Ovary (tissue), 10 donors: ENCODE measurements at regions of chr4 and their contacts with region 1.

Region 1: DNA sequence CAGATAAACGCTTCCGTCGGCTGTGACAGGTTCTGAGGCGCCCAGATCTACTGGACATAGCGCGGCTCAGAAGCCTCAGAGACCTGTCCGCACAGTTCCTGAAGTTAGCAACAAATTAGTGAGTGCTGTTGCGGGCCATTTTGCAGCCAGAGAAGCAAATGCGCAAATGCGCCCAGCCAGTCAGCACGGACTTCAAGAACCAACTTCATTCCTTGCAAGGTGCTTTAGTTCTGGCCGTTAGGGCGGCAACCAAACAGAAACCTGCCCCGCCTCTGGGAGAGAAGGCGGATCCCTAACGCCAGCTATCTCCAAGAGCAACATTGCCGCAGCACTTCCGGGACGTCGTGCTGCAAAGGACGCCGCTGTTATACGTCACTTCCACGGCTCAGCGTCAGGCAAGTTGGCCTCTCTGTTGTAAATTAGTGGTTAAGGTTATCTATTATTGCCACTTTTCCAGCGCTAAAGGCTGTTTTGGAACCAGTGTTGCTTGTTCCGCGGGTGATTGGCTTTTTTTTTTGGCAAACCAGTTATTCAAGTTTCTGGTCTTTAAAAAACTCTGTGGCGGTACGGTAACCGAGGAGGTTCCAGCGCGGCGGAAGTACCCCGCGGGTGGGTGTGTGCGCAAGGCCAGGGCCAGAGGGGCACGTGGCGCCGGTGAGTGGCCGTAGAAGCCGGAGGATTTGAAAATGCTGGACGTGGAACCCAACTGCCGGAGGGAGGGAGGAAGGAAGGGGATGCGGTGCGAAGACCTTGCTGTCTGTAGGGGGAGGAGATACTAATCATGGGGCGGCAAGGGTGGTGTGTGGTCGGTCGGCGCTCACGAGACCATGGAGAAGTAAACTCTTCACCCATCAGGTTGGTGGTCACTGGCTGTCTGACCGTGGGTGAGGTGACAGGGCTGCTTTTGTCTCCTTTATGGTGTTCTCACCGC is at the start of gene GAR1:
- DNase-seq: peak; percentile 83 to 87 (median 84)
- H3K4me3 ChIP-seq: peak within 1 kb of the TSS; percentile 85
- H3K27ac ChIP-seq: peak within 1 kb of the TSS; percentile 23 to 72
- H3K4me1 ChIP-seq: peaks cover 4% of the 10 kb centered on the region
- H3K27me3 ChIP-seq: no peaks in the 10 kb centered on the region
- CTCF ChIP-seq: no peak
- EP300 ChIP-seq: no peak
- POLR2A ChIP-seq: no peak
- total RNA-seq, gene GAR1: 4.3 to 22.5 (median 15.7) TPM

Region 2: DNA sequence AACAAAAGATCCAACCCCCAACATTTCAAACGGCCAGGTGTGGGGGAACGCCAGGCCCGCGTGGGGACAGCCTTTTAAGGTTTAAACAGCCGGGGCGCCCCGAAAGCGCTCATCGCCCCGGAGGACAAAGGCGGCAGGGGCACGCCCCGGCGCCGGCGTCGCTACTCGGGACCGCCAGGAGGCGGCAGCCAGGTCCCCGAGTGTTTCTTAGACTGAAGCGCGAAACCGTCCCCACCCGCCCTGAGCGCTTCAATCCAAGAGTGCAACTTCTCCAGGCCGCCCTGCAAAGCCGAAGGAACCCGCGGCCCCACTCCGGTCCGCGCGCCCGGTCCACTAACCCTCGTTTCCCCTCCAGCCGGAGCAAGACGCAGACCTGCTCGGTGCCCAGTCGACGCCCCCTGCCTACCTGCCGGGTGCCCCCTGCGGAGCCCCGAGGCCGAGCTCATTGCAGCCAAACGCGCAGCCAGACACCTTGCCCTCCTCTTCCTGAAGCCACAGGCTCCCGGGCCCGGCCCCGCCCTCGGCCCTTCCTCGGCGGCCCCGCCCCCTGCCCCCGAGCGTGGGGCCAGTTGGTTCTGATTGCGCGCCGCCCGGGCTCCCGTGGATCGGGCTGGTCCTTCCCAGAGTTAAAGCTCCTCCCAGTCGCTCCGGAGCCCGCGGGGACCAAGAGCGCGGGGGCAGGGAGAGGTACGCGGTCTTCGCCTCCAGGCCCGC is 112.3 kb before region 1 on chr4 and contains the start of gene CASP6:
- intact Hi-C with region 1: loop called in 3 of 4 experiments (anchors 10 kb)
- DNase-seq: peak; percentile 83 to 90 (median 84)
- H3K4me3 ChIP-seq: peak within 1 kb of the TSS; percentile 88
- H3K27ac ChIP-seq: peak within 1 kb of the TSS; percentile 63 to 68
- H3K4me1 ChIP-seq: peaks cover 5% of the 10 kb centered on the region
- H3K27me3 ChIP-seq: no peaks in the 10 kb centered on the region
- CTCF ChIP-seq: peak; percentile 23 to 63 (median 57)
- EP300 ChIP-seq: no peak
- POLR2A ChIP-seq: no peak
- total RNA-seq, gene CASP6: 11.2 to 19.3 (median 13.1) TPM

Region 3: DNA sequence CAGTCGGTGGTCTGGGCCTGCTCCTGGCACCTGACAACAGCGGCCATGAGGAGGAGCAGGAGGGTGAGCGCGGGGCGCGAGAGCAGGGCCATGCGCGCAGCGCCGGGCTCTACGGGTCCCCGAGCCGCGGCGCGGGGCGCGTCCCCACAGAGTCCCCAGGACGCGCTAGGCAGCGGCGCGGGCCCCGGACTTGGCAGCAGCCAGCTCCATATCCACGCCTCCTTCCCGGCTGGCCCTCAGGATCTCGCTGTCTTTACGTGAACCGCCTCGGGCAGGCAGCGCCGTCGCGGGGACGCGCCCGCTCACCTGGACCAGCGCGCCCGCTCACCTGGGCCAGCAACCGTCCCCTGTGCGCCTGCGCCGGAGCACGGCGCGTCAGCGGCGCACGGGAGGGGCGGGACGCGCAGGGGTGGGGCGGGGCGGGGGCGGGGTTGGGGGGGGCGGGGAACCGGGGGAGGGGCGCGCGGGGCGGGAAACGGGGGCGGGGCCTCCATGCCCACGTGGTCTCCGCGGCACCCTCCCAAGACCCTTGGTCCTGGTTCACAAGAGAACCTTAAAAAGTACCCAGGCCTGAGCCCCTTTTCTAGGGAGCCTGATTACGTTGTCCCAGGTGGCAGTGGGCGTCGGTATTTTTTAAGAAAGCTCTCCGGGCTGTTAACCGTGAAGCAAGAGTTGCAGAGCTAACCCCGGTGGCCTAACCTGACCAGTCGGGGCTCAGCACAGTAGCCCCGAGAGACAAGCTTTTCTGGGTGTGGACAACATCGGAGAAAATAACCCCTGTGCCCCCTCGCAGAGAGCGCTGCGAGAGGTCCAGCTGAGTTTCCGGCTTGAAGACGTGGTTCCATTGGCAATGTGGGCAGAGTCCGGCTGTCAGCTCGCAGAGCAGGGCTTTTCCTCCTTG is 85.4 kb before region 1 on chr4 and contains the start of gene PLA2G12A:
- intact Hi-C with region 1: loop called in 1 of 4 experiments (anchors 10 kb)
- DNase-seq: peak; percentile 63 to 84 (median 81)
- H3K4me3 ChIP-seq: peak within 1 kb of the TSS; percentile 83
- H3K27ac ChIP-seq: peak within 1 kb of the TSS; percentile 72 to 76
- H3K4me1 ChIP-seq: no peaks in the 10 kb centered on the region
- H3K27me3 ChIP-seq: no peaks in the 10 kb centered on the region
- CTCF ChIP-seq: no peak
- EP300 ChIP-seq: no peak
- POLR2A ChIP-seq: peak; percentile 52
- total RNA-seq, gene PLA2G12A: 31.2 to 84.3 (median 35.9) TPM

Region 4: GRCh38 chr4:109752525-109752924 is 62.9 kb before region 1 on chr4:
- intact Hi-C with region 1: no loop called
- DNase-seq: no peak
- H3K4me3 ChIP-seq: no peak overlapping the region
- H3K27ac ChIP-seq: no peak overlapping the region
- H3K4me1 ChIP-seq: no peaks in the 10 kb centered on the region
- H3K27me3 ChIP-seq: no peaks in the 10 kb centered on the region
- CTCF ChIP-seq: no peak
- EP300 ChIP-seq: no peak
- POLR2A ChIP-seq: no peak

Region 5: GRCh38 chr4:109910256-109910655 is 94.8 kb after region 1 on chr4:
- intact Hi-C with region 1: no loop called
- DNase-seq: no peak
- H3K4me3 ChIP-seq: no peak overlapping the region
- H3K27ac ChIP-seq: no peak overlapping the region
- H3K4me1 ChIP-seq: no peaks in the 10 kb centered on the region
- H3K27me3 ChIP-seq: no peaks in the 10 kb centered on the region
- CTCF ChIP-seq: no peak
- EP300 ChIP-seq: no peak
- POLR2A ChIP-seq: no peak